Heart left ventricle (tissue), 16 donors: ENCODE measurements at regions of chr6 and their contacts with region 1.

Region 1: GRCh38 chr6:87154993-87155841 is at the start of gene ZNF292:
- DNase-seq: peak; percentile 94 to 98 (median 96)
- ATAC-seq: peak; percentile 90 to 95 (median 91)
- H3K4me3 ChIP-seq: peak within 1 kb of the TSS; percentile 69 to 97 (median 86)
- H3K27ac ChIP-seq: peak within 1 kb of the TSS; percentile 90 to 97 (median 94)
- H3K4me1 ChIP-seq: peaks cover 3 to 66% (median 40%) of the 10 kb centered on the region in 12 donors
- H3K27me3 ChIP-seq: no peaks in the 10 kb centered on the region
- CTCF ChIP-seq: peak in 4 of 12 donors; percentile 10 to 34 (median 28)
- POLR2A ChIP-seq: peak in 1 of 2 donors; percentile 18
- total RNA-seq, gene ZNF292: 13.6 to 35.8 (median 28.1) TPM

Region 2: DNA sequence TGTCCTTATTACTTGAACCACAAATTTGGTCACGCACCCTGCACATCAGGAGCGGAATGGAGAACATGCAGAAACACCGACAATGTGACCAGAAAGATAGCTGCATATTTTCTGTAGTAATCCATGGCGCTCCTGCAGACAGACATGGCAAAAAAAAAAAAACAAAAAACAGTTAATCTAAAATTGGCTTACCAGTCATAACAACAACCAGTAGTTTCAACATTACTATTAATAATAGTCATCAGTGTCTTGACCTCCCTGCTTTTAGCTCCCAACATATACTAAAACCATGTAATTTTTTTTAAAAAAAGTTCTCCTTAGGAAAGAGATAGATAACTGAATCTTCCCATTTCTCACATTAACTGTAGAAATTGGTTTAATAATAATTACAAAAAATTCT is 67.1 kb before region 1 on chr6:
- intact Hi-C with region 1: no loop called
- DNase-seq: no peak
- ATAC-seq: no peak
- H3K4me3 ChIP-seq: no peak overlapping the region
- H3K27ac ChIP-seq: no peak overlapping the region
- H3K4me1 ChIP-seq: no peaks in the 10 kb centered on the region
- H3K27me3 ChIP-seq: peaks cover 0 to 11% (median 0%) of the 10 kb centered on the region in 9 donors
- CTCF ChIP-seq: no peak
- POLR2A ChIP-seq: no peak

Region 3: DNA sequence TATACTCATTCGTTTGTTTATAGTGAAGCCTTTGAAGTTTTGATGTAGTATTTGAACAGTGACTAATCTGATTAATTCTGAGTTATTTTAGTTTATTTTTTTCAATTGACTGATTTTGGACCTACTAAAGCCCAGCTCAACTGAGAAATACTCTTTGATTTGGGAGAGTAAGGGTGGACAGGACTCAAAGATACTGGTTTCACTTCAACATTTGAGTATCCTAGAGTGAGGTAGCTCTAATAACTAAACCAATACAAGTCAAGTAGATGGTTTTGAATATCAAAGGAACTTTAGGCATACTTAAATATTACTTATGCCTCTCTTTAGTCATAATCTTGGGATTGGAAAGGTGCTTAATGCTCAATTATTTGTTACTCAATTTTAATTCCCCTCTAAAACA is 65.8 kb after region 1 on chr6:
- intact Hi-C with region 1: loop called in 1 of 10 experiments (anchors 10 kb)
- DNase-seq: no peak
- ATAC-seq: no peak
- H3K4me3 ChIP-seq: no peak overlapping the region
- H3K27ac ChIP-seq: no peak overlapping the region
- H3K4me1 ChIP-seq: peaks cover 0 to 7% (median 0%) of the 10 kb centered on the region in 12 donors
- H3K27me3 ChIP-seq: no peaks in the 10 kb centered on the region
- CTCF ChIP-seq: no peak
- POLR2A ChIP-seq: no peak

Region 4: DNA sequence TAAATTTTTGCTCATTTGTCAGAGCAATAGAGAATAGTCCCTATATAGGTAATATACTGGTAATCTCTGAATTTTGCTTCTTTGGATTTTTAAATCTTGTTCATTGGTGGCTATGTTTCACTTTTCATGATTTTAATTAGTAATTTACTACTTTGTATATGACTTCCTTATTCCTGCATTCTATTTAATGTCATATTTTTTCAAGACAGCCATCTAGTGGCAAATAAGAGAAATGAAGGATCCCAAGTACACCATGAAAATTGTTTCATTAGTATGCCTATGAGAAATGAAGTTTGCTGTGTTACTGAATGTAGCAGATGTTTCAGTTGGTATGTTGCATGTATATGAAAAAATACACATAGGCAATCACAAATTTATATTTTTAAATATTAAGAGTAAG is 82.6 kb after region 1 on chr6:
- intact Hi-C with region 1: loop called in 5 of 10 experiments (anchors 5 kb)
- DNase-seq: no peak
- ATAC-seq: peak in 1 of 4 donors; percentile 42
- H3K4me3 ChIP-seq: no peak overlapping the region
- H3K27ac ChIP-seq: no peak overlapping the region
- H3K4me1 ChIP-seq: no peaks in the 10 kb centered on the region
- H3K27me3 ChIP-seq: no peaks in the 10 kb centered on the region
- CTCF ChIP-seq: peak; percentile 44 to 68 (median 62)
- POLR2A ChIP-seq: no peak

Region 5: DNA sequence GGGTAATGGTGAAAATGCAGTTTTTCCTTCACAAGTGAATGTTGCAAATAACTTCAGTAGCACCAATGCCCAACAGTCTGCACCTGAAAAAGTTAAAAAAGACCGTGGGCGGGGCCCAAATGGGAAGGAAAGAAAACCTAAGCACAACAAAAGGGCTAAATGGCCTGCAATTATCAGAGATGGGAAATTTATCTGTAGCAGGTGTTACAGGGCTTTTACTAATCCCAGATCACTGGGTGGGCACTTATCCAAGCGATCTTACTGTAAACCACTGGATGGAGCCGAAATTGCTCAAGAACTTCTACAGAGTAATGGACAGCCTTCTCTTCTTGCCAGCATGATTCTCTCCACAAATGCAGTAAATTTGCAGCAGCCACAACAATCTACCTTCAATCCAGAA is 102.3 kb after region 1 on chr6:
- intact Hi-C with region 1: no loop called
- DNase-seq: no peak
- ATAC-seq: no peak
- H3K4me3 ChIP-seq: no peak overlapping the region
- H3K27ac ChIP-seq: no peak overlapping the region
- H3K4me1 ChIP-seq: no peaks in the 10 kb centered on the region
- H3K27me3 ChIP-seq: no peaks in the 10 kb centered on the region
- CTCF ChIP-seq: no peak
- POLR2A ChIP-seq: no peak

Region 6: DNA sequence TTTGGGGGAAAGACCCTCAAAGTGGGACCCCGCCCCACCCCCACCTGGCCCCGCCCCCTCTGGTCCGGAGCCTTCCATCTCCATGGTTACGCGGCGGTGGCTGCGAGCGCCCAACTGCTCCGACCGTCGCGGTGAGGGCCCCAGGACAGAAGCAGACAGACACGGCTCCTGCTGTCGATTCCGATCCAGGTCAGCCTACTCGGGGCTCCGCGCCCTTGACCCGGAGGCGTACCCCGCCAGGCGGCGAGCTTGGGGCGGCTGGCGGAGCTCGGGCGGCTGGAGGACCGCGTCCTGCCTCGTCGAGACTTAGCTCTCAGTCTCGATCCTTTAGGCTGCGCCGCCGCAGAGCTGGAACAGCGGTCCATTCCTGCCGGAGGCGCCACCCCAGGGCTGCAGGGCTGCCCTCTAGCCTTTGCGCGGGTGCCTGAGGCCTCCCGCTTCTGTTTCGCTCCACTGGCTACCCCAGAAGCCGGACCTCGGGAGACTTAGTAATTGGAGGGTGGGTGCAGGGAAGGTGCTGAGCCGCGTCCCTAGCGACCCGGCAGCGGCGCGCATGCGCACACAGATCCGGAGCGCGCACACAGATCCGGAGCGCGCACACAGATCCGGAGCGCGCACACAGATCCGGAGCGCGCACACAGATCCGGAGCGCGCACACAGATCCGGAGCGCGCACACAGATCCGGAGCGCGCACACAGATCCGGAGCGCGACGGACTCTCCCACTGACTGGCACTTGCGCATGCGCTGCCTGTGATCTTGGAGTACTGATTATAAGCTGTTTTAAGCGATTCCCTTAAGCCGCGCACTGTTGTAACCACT is 252.9 kb after region 1 on chr6 and contains the start of gene CFAP206:
- intact Hi-C with region 1: loop called in 2 of 10 experiments (anchors 10 kb)
- DNase-seq: peak; percentile 77 to 90 (median 86)
- ATAC-seq: peak; percentile 88 to 97 (median 96)
- H3K4me3 ChIP-seq: peak within 1 kb of the TSS; percentile 54 to 97 (median 91)
- H3K27ac ChIP-seq: peak within 1 kb of the TSS; percentile 44 to 88 (median 78)
- H3K4me1 ChIP-seq: peaks cover 0 to 11% (median 5%) of the 10 kb centered on the region in 12 donors
- H3K27me3 ChIP-seq: no peaks in the 10 kb centered on the region
- CTCF ChIP-seq: peak in 5 of 12 donors; percentile 15 to 46 (median 19)
- POLR2A ChIP-seq: no peak
- total RNA-seq, gene CFAP206: 0.12 to 0.41 (median 0.23) TPM in 7 of 9 donors, not detected in the others

Region 7: DNA sequence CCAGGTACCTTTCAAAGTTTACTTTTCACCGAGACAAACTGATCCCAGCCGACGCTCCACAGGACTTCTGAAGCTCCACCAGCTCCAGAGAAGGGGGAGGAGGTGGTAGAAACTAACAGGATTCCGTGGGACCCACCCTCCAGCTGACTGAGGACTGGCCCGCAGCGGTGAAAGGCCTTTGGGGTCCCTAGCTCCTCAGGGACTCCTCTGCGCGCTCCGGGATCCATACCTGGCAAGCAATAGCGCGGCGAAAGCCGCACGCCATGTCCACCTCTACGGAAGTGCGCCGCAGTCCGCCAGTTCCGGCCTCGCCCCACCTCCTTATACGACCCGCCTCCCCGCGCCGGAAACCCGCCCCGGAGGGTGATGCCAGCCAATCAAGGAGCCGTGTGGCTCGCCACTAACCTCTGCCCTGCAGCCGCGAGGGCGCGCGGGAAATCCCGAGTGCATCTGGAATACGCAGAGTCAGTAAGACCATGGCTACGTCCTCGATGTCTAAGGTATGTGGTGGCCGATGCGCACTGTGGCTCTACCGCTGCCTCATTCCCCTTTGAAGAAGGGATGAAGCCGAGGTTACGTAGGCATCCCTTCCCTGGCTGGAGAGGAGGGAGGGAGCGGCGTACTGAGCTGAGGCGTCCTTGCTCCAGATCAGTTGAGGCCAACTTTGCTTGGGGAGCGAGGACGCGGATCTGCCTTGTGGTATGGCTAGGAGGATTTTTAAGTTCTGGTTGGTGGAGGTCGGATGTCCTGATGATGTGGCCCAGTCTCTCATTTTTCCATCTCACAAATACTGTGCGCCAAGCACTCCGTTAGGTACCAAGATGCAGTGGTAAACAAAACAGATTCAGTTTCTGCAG is 434.7 kb after region 1 on chr6 and contains the starts of genes ORC3 and RARS2:
- intact Hi-C with region 1: loop called in 2 of 10 experiments (anchors 10 kb)
- DNase-seq: peak; percentile 95 to 99 (median 97)
- ATAC-seq: peak; percentile 100
- H3K4me3 ChIP-seq: peak within 1 kb of the TSS; percentile 60 to 96 (median 84)
- H3K27ac ChIP-seq: peak within 1 kb of the TSS; percentile 42 to 92 (median 82)
- H3K4me1 ChIP-seq: peaks cover 6 to 50% (median 30%) of the 10 kb centered on the region in 12 donors
- H3K27me3 ChIP-seq: no peaks in the 10 kb centered on the region
- CTCF ChIP-seq: peak in 1 of 12 donors; percentile 13
- POLR2A ChIP-seq: peak; percentile 9 to 89
- total RNA-seq, gene ORC3: 15.2 to 28.6 (median 20.8) TPM
- total RNA-seq, gene RARS2: 13.3 to 24.2 (median 20.3) TPM

Region 8: DNA sequence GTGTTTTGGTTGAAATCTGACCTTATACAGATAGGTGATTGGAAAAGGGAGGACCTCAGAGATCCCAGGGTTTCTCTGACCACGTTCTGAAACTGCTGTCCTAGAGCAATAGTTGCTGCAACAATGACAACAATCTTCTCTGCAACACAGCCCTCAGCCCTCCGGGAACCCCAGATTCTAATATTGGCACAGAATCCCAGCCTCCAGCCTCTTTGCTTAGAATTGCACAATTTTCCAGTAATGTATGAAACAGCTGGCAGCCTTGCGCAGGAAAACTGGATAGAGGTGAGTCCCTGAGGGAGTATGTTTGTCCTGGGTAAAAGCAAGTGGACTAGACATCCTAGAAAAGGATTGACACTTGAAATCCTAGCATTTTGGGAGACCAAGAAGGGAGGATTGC is 1894.9 kb after region 1 on chr6:
- intact Hi-C with region 1: no loop called
- DNase-seq: peak in 3 of 5 donors; percentile 30 to 66 (median 50)
- ATAC-seq: peak; percentile 59 to 85 (median 72)
- H3K4me3 ChIP-seq: no peak overlapping the region
- H3K27ac ChIP-seq: peak overlapping the region in 1 of 12 donors; percentile 9
- H3K4me1 ChIP-seq: peaks cover 0 to 51% (median 5%) of the 10 kb centered on the region in 12 donors
- H3K27me3 ChIP-seq: no peaks in the 10 kb centered on the region
- CTCF ChIP-seq: no peak
- POLR2A ChIP-seq: no peak